GM10248 (cell line): ENCODE measurements at regions of chr2 and their contacts with region 1.

Region 1: DNA sequence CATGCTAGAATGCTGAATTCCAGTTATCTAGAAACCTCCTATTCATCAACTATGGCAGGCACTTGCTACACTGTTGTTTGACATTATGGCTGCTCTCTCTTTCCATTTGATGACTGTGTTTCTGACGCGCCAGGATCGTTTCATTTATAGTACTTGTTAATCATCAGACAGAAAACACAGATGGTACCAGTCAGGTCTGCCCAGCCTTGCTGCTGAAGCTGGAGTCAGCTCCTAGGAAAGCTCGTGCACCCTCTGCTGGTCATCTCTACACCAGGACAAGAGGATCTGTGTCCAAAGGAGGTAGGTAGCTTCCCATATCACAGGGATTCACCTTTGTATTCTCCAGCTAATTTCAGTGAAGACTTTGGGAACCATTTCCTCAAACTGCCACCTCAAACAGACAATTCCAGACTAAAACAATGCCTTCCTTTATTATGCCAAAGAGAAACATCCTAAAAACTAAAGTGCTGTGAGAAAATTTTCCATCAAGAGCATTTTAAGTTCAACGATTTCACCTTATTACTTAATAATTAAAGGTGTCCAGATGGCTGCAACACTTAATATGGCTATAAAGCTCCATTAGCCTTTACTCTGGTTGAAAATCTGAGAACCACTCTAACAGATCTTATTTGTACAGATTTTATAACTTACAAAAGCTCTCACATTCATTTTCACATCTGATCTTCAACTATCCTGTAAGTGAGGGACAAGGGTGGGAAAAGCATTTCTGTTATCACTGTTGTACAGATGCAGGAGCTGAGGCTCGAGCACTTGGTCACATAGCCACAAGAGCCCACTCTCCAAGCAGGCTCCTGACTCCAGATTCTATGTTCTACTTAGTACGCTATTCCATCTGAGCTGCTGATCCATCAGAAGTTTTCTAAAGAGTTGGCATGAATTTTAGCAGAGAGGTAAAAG is 17.5 kb downstream of the METTL8 start:
- DNase-seq: peak; percentile 74
- CTCF ChIP-seq: peak; percentile 80

Region 2: DNA sequence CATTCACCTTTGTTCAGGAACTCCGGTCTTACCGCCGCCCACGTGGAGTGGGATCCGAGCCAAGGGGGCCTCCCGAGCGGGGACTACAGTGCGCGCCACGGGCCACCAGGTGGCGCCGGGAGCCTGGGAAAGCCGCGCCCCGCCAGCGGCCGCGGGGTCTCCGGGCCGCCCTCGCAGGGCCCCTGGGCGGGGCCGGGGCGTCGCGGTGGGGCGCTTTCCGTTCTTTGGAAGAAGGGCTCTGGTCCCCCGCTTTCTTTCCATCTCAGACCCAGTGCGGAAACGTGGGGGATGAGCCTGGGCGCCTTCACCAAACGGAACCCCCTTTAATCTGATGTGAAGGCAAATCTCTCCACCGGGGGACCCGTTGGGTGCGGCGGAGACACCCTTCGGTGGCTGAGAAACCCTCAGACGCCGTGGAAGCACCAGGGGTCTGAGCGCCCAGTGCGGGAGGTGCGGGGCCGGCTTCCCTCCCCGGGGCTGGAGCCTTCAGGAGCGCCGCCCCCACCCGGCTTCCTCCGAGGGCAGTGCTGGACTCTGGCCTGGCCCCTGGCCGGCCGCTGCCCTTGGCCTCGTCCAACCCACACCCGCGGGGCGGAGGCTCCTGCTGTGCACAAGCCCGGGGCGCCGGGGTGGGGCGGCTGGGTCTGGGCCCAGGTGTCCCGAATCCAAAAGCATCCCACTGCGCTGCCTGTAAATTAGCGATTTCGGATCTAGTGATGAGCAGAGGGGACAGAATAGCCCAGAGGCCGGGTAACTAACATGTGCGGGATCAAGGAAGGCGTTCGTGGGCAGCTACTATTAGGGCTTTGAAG is 442.6 kb before region 1 on chr2:
- CTCF ChIA-PET with region 1: interaction called, 20 read pairs
- POLR2A ChIA-PET with region 1: no interaction called
- DNase-seq: peak; percentile 96
- CTCF ChIP-seq: peak; percentile 94

Region 3: DNA sequence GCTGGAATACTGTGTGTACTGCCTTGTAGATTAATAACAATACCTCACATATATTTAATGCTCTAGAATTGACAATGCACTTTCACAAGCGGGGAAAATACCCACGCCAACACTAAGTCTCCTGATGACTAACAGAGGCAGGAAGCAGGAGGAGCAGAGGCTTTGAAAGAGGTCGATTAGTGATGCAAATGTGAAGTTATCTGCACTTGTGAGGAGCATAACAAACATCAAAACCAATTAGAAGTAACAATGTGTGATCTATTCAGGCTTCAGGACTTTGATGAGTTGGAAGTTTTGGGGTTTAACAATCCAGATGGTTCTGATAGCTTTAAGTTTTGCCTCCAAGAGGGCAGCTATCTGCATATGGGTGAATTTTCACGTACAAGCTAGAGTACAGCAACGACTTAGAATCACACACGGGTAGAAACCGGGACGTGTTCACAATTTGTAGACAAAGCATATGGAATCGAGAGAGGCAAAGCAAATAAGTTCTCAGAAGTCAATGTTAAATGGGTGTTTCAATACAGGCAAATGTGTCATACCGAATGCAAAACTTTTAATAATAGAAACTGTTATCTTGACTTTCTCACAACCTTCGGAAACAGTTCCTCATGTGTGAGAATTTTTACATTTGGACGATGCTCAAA is 97.0 kb before region 1 on chr2:
- CTCF ChIA-PET with region 1: interaction called, 36 read pairs
- POLR2A ChIA-PET with region 1: interaction called, 4 read pairs
- DNase-seq: peak; percentile 40
- CTCF ChIP-seq: no peak

Region 4: GRCh38 chr2:171334171-171334570 is 82.1 kb before region 1 on chr2:
- CTCF ChIA-PET with region 1: interaction called, 10 read pairs
- POLR2A ChIA-PET with region 1: no interaction called
- DNase-seq: no peak
- CTCF ChIP-seq: no peak

Region 5: DNA sequence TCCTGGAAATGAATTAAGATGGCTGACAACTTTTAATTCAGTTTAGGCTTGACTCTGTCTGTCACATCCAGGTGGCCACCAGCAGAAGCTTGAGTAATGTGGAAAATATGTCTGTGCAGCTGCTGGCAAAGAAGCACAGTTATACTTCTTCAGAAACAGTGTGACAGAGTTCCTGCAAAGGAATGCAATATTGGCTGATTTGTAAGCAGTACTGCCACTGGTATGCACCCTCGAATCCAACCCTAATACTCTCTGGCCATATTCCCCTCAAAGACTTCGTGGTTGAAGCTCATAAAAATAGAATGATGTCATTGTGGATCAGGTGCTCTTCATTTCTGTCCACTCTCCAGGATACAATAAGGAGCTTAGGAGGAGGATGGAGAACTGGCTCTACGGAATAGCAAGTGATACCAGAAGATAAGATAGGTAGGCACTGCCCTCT is 68.7 kb before region 1 on chr2:
- CTCF ChIA-PET with region 1: interaction called, 14 read pairs
- POLR2A ChIA-PET with region 1: interaction called, 3 read pairs
- DNase-seq: peak; percentile 20
- CTCF ChIP-seq: no peak

Region 6: DNA sequence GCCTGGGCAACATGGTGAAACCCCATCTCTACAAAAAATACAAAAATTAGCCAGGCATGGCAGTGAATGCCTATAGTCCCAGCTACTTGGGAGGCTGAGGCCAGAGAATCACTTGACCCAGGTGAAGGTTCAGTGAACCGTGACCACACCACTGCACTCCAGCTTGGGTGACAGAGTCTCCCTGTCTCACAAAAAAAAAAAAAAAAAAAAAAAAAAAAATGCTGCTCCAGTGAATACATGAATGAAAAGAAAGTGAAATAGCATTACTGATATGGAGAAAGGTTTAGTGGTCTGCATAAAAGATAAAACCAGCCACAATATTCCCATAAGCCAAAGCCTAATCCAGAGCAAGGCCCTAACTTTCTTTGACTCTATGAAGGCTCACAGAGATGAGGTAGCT is 26.9 kb before region 1 on chr2:
- CTCF ChIA-PET with region 1: interaction called, 18 read pairs
- POLR2A ChIA-PET with region 1: interaction called, 4 read pairs
- DNase-seq: no peak
- CTCF ChIP-seq: no peak

Region 7: GRCh38 chr2:171574149-171574795 is 158.0 kb after region 1 on chr2:
- CTCF ChIA-PET with region 1: no interaction called
- POLR2A ChIA-PET with region 1: no interaction called
- DNase-seq: peak; percentile 89
- CTCF ChIP-seq: peak; percentile 90